ENCODE measurements at regions of chr11 and their contacts with region 1.

Region 1: GRCh38 chr11:9651899-9652748 is 11.8 kb upstream of the SWAP70 start:
- DNase-seq: no peak
- H3K4me3 ChIP-seq: no peak overlapping the region
- H3K27ac ChIP-seq: no peak overlapping the region
- H3K4me1 ChIP-seq: no peaks in the 10 kb centered on the region
- H3K27me3 ChIP-seq: no peaks in the 10 kb centered on the region
- CTCF ChIP-seq: no peak
- EP300 ChIP-seq: no peak
- POLR2A ChIP-seq: no peak

Region 2: GRCh38 chr11:9739123-9739894 is 87.2 kb after region 1 on chr11:
- intact Hi-C with region 1: loop called in 1 of 4 experiments (anchors 10 kb)
- DNase-seq: no peak
- H3K4me3 ChIP-seq: no peak overlapping the region
- H3K27ac ChIP-seq: no peak overlapping the region
- H3K4me1 ChIP-seq: no peaks in the 10 kb centered on the region
- H3K27me3 ChIP-seq: no peaks in the 10 kb centered on the region
- CTCF ChIP-seq: no peak
- EP300 ChIP-seq: no peak
- POLR2A ChIP-seq: no peak

Region 3: DNA sequence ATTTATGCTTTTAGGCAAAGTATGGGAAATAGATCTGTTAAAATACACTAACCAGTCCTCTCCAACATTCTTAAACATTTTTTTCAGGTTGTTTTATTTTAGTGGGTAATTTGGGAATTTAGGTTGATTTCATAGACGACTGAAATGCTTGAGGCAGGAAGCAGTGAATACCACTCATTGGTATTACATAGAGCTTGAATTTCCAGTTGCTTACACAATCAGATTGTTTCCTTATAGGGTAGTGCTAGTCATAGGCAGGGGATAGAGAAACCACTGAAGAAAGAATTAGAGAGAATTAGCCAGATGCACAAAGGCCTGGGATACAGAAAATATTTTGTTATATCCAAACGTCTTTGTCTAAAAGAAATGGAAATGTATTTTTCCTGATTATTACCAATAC is 940.2 kb after region 1 on chr11:
- intact Hi-C with region 1: no loop called
- DNase-seq: no peak
- H3K4me3 ChIP-seq: no peak overlapping the region
- H3K27ac ChIP-seq: no peak overlapping the region
- H3K4me1 ChIP-seq: no peaks in the 10 kb centered on the region
- H3K27me3 ChIP-seq: no peaks in the 10 kb centered on the region
- CTCF ChIP-seq: no peak
- EP300 ChIP-seq: no peak
- POLR2A ChIP-seq: no peak

Measured in ovary (tissue), 10 donors.